ENCODE measurements at regions of chr10 and their contacts with region 1.

Region 1: DNA sequence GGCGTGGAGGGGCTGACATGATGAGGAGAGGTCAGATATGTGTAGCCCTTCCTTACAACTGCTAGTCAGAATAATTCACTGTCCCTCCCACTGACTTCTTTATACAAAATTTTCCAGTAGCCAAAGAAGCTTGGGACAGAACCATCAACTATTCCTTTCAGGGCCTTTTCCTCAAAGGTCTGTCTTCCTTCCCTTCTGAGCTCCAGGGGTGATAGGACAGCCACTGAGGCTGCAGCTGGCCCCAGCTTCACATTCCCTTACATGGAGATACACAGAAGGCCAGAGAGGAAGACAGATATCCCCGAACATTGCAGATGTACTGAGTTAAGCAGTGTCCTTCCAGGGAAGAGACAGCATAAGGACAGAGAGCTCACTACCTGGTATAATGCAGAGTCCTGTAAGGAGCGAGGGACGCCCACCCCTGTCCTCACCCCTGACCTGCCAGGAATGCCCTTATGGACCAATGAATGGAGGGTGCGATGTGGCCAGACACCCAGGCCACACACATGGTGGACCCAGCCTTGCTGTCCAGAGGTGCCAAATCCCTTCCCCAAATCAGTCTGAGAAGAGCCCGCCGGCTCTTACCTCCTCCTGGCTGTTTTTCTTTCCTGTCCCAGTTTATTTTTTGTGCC is 754.7 kb downstream of the GRID1 start:
- DNase-seq: no peak

Region 2: DNA sequence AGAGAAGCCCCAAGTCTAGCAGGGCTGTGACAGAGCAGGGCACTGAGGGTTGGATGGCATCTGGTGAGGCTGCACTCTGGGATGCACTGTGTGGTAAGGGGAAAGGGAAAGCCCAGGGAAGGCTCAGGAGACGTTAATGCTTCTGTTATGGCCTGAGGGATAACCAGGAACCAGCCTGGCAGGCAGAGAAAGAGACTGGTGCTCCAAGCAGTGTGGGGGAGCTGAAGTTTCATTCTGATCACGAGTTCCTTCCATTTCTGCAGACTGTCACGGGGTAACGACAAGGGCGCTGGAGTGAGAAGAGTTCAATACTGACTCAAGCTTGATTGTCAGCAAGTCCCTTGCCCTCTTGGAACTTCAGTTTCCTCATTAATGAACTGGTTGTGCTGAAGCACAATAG is 23.8 kb after region 1 on chr10:
- intact Hi-C with region 1: loop called in 1 of 2 experiments (anchors 1 kb)
- DNase-seq: no peak

Region 3: GRCh38 chr10:85655411-85655810 is 43.5 kb after region 1 on chr10:
- intact Hi-C with region 1: no loop called
- DNase-seq: no peak

Measured in posterior vena cava (tissue), 2 donors.